CD4-positive, alpha-beta memory T cell (primary cell): ENCODE measurements at regions of chr22 and their contacts with region 1.

Region 1: GRCh38 chr22:40177738-40178416 is at the start of gene TNRC6B:
- DNase-seq: peak; percentile 88 to 94 (median 90)
- H3K4me3 ChIP-seq: peak within 1 kb of the TSS; percentile 56 to 84
- H3K4me3 Mint-ChIP-seq: peak within 1 kb of the TSS; percentile 79 to 97 (median 92)
- H3K27ac ChIP-seq: peak within 1 kb of the TSS; percentile 60
- H3K27ac Mint-ChIP-seq: peak within 1 kb of the TSS; percentile 84 to 98 (median 92)
- H3K4me1 ChIP-seq: peaks cover 67% of the 10 kb centered on the region
- H3K4me1 Mint-ChIP-seq: peaks cover 46 to 74% (median 58%) of the 10 kb centered on the region in 4 donors
- H3K27me3 ChIP-seq: no peaks in the 10 kb centered on the region
- H3K27me3 Mint-ChIP-seq: no peaks in the 10 kb centered on the region
- total RNA-seq, gene TNRC6B: 137 to 155 TPM

Region 2: GRCh38 chr22:40137132-40137531 is 40.7 kb before region 1 on chr22:
- CTCF ChIA-PET with region 1: no interaction called
- POLR2A ChIA-PET with region 1: no interaction called
- intact Hi-C with region 1: no loop called
- DNase-seq: no peak
- H3K4me3 ChIP-seq: no peak overlapping the region
- H3K4me3 Mint-ChIP-seq: no peak overlapping the region
- H3K27ac ChIP-seq: no peak overlapping the region
- H3K27ac Mint-ChIP-seq: peak overlapping the region in 2 of 7 donors; percentile 26 to 50
- H3K4me1 ChIP-seq: no peaks in the 10 kb centered on the region
- H3K4me1 Mint-ChIP-seq: peaks cover 7 to 21% (median 17%) of the 10 kb centered on the region in 4 donors
- H3K27me3 ChIP-seq: no peaks in the 10 kb centered on the region
- H3K27me3 Mint-ChIP-seq: no peaks in the 10 kb centered on the region

Region 3: GRCh38 chr22:40161194-40161593 is 16.7 kb before region 1 on chr22:
- CTCF ChIA-PET with region 1: interaction called, 3 read pairs
- POLR2A ChIA-PET with region 1: interaction called, 13 read pairs
- intact Hi-C with region 1: no loop called
- DNase-seq: no peak
- H3K4me3 ChIP-seq: no peak overlapping the region
- H3K4me3 Mint-ChIP-seq: no peak overlapping the region
- H3K27ac ChIP-seq: no peak overlapping the region
- H3K27ac Mint-ChIP-seq: peak overlapping the region in 2 of 7 donors; percentile 10 to 61
- H3K4me1 ChIP-seq: no peaks in the 10 kb centered on the region
- H3K4me1 Mint-ChIP-seq: peaks cover 0 to 20% (median 8%) of the 10 kb centered on the region in 4 donors
- H3K27me3 ChIP-seq: no peaks in the 10 kb centered on the region
- H3K27me3 Mint-ChIP-seq: no peaks in the 10 kb centered on the region

Region 4: GRCh38 chr22:40215266-40215665 is 37.4 kb after region 1 on chr22:
- CTCF ChIA-PET with region 1: no interaction called
- POLR2A ChIA-PET with region 1: interaction called, 10 read pairs
- intact Hi-C with region 1: loop called (anchors 2 kb)
- DNase-seq: no peak
- H3K4me3 ChIP-seq: no peak overlapping the region
- H3K4me3 Mint-ChIP-seq: peak overlapping the region in 7 of 8 donors; percentile 58 to 89 (median 81)
- H3K27ac ChIP-seq: peak overlapping the region; percentile 64
- H3K27ac Mint-ChIP-seq: peak overlapping the region; percentile 83 to 94 (median 94)
- H3K4me1 ChIP-seq: peaks cover 95% of the 10 kb centered on the region
- H3K4me1 Mint-ChIP-seq: peaks cover 76 to 94% (median 84%) of the 10 kb centered on the region in 4 donors
- H3K27me3 ChIP-seq: no peaks in the 10 kb centered on the region
- H3K27me3 Mint-ChIP-seq: no peaks in the 10 kb centered on the region

Region 5: DNA sequence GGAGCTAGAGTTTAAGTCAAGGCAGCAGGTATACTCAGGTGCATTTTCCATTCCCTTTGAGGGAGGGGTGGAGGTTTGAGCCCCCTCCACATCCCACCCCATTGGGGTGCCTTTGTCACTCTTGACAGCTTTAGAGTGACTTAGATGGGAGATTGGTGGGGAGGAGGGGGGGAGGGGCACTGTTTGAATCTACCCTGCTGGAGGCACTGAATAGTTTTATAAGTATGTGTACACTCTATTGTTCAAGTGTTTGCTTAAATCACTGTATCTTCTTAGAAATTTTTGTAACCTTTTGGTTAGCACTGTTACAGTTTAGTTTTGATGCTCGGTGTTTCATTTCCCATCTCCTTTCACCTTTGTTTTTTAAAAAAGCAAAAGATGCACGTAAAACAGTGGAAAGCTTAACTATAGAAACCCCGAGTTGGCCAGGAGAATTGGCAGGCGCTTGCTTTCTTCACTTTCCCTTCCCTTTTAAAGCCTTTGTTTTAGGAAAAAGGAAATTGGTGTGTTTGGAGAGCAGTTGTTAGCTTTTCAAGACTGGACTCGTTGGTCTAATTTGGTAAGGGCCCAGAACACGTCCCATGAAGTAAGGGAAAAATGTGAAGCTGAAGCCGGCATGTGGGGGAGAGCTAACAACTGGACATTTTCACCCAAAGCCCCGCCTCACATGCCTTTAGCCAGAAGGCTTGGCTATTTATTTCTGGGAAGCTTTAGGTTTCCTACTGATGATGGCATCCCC is 42.6 kb after region 1 on chr22:
- CTCF ChIA-PET with region 1: interaction called, 3 read pairs
- POLR2A ChIA-PET with region 1: interaction called, 10 read pairs
- intact Hi-C with region 1: loop called (anchors 2 kb)
- DNase-seq: no peak
- H3K4me3 ChIP-seq: no peak overlapping the region
- H3K4me3 Mint-ChIP-seq: no peak overlapping the region
- H3K27ac ChIP-seq: no peak overlapping the region
- H3K27ac Mint-ChIP-seq: peak overlapping the region in 4 of 7 donors; percentile 23 to 94 (median 80)
- H3K4me1 ChIP-seq: peaks cover 94% of the 10 kb centered on the region
- H3K4me1 Mint-ChIP-seq: peaks cover 67 to 90% (median 77%) of the 10 kb centered on the region in 4 donors
- H3K27me3 ChIP-seq: no peaks in the 10 kb centered on the region
- H3K27me3 Mint-ChIP-seq: no peaks in the 10 kb centered on the region

Region 6: GRCh38 chr22:40243891-40244290 is 66.0 kb after region 1 on chr22:
- CTCF ChIA-PET with region 1: interaction called, 5 read pairs
- POLR2A ChIA-PET with region 1: interaction called, 7 read pairs
- intact Hi-C with region 1: loop called (anchors 5 kb)
- DNase-seq: peak in 4 of 5 donors; percentile 46 to 61 (median 50)
- H3K4me3 ChIP-seq: peak overlapping the region in 1 of 2 donors; percentile 13
- H3K4me3 Mint-ChIP-seq: peak overlapping the region; percentile 69 to 86 (median 77)
- H3K27ac ChIP-seq: peak overlapping the region; percentile 35
- H3K27ac Mint-ChIP-seq: peak overlapping the region; percentile 53 to 88 (median 79)
- H3K4me1 ChIP-seq: peaks cover 95% of the 10 kb centered on the region
- H3K4me1 Mint-ChIP-seq: peaks cover 63 to 95% (median 76%) of the 10 kb centered on the region in 4 donors
- H3K27me3 ChIP-seq: no peaks in the 10 kb centered on the region
- H3K27me3 Mint-ChIP-seq: no peaks in the 10 kb centered on the region

Region 7: GRCh38 chr22:40258451-40259046 is 80.7 kb after region 1 on chr22:
- CTCF ChIA-PET with region 1: no interaction called
- POLR2A ChIA-PET with region 1: no interaction called
- intact Hi-C with region 1: no loop called
- DNase-seq: peak in 3 of 5 donors; percentile 32 to 58 (median 44)
- H3K4me3 ChIP-seq: no peak overlapping the region
- H3K4me3 Mint-ChIP-seq: peak overlapping the region; percentile 23 to 79 (median 68)
- H3K27ac ChIP-seq: peak overlapping the region; percentile 43
- H3K27ac Mint-ChIP-seq: peak overlapping the region; percentile 65 to 94 (median 81)
- H3K4me1 ChIP-seq: peaks cover 88% of the 10 kb centered on the region
- H3K4me1 Mint-ChIP-seq: peaks cover 54 to 83% (median 71%) of the 10 kb centered on the region in 4 donors
- H3K27me3 ChIP-seq: no peaks in the 10 kb centered on the region
- H3K27me3 Mint-ChIP-seq: no peaks in the 10 kb centered on the region

Region 8: DNA sequence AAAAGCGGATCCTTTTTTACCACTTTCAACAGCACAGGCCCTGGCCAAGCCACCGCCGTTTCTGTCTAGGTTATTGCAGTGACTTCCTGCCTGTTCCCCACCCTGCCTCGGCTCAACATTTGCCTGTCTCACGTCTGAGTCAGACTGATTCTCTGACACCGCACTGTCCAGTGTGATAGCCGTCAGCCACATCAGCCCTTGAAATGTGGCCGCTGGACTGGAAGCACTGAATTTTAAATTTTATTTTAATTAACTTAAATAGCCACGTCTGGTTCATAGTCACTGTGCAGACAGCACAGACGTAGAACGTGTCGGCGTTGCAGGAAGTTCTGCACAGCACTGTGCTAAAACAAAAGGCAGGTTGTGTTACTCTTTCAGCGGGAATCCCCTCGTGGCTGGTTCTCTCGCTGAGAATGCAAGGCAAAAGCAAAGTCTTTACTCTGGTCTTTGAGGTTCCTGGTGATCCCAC is 112.1 kb after region 1 on chr22:
- CTCF ChIA-PET with region 1: no interaction called
- POLR2A ChIA-PET with region 1: interaction called, 4 read pairs
- intact Hi-C with region 1: loop called (anchors 2 kb)
- DNase-seq: peak; percentile 69 to 89 (median 75)
- H3K4me3 ChIP-seq: no peak overlapping the region
- H3K4me3 Mint-ChIP-seq: peak overlapping the region; percentile 13 to 86 (median 78)
- H3K27ac ChIP-seq: peak overlapping the region; percentile 91
- H3K27ac Mint-ChIP-seq: peak overlapping the region; percentile 95 to 99 (median 97)
- H3K4me1 ChIP-seq: peaks cover 66% of the 10 kb centered on the region
- H3K4me1 Mint-ChIP-seq: peaks cover 43 to 73% (median 58%) of the 10 kb centered on the region in 4 donors
- H3K27me3 ChIP-seq: no peaks in the 10 kb centered on the region
- H3K27me3 Mint-ChIP-seq: no peaks in the 10 kb centered on the region

Region 9: DNA sequence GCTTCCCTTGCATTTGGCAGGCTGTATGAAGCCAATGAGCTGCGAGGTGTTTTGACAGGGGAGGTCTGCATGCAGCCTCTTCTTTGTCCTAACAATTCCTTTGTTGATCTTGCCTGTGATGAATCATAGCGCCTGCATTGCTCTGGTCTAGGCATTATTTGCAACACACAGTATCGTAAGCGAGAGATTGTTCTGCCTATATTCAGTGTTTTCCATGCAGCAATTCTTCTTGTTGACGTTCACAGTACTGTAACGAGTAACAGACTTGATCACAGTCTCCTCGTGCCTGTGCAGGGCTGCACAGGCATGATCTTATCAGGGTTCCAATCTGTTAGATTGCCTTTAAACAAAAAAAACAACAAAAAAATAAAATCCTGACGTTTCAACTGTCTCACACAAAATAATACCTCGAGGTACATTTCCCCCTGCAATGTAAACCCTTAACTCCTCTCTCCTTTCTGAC is 154.5 kb after region 1 on chr22:
- CTCF ChIA-PET with region 1: interaction called, 3 read pairs
- POLR2A ChIA-PET with region 1: interaction called, 11 read pairs
- intact Hi-C with region 1: no loop called
- DNase-seq: peak in 4 of 5 donors; percentile 29 to 56 (median 39)
- H3K4me3 ChIP-seq: peak overlapping the region; percentile 17 to 18
- H3K4me3 Mint-ChIP-seq: peak overlapping the region; percentile 11 to 80 (median 71)
- H3K27ac ChIP-seq: peak overlapping the region; percentile 32
- H3K27ac Mint-ChIP-seq: peak overlapping the region; percentile 77 to 95 (median 90)
- H3K4me1 ChIP-seq: peaks cover 98% of the 10 kb centered on the region
- H3K4me1 Mint-ChIP-seq: peaks cover 71 to 99% (median 87%) of the 10 kb centered on the region in 4 donors
- H3K27me3 ChIP-seq: no peaks in the 10 kb centered on the region
- H3K27me3 Mint-ChIP-seq: no peaks in the 10 kb centered on the region